Common myeloid progenitor, CD34-positive (primary cell): ENCODE measurements at regions of chr13 and their contacts with region 1.

Region 1: DNA sequence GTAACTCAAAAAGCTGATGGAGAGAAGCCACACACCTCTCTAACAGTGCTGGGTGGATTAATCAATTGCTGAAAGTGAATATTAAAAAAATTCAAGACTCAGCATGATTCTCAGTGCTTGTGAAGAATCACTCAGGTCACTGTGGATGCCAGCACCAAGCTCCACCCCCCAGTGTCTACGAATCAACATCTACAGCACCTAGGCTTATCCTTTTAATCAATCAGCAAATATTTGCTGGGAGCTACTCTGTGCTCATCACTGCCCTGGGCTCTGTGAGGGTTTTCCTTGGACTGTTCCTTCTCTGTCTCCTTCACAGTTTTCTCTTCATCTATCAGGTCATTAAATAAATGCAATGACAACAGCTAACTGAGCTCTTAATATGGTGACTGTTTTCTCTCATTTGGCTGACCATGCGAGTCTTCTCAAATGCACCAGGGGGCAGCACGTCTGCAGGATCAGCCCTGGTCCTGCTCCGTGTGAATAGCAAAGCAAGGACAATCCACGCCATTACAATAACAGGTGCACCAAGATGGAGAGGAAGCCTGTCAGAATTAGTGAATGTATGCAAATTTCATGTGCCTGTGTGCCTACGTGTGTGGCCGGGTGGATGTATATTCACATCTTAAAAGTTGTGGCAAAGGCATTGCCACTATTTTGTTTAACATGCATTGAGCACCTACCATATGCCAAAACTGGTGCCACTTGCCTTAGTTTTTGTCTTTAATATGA is 14.6 kb upstream of the C13orf42 start:
- DNase-seq: peak; percentile 67 to 83 (median 82)
- H3K4me3 ChIP-seq: no peak overlapping the region
- H3K27ac ChIP-seq: no peak overlapping the region
- H3K4me1 ChIP-seq: no peaks in the 10 kb centered on the region
- H3K27me3 ChIP-seq: no peaks in the 10 kb centered on the region

Region 2: GRCh38 chr13:51113969-51114368 is 11.7 kb before region 1 on chr13:
- CTCF ChIA-PET with region 1: interaction called, 18 read pairs
- POLR2A ChIA-PET with region 1: no interaction called
- DNase-seq: no peak
- H3K4me3 ChIP-seq: no peak overlapping the region
- H3K27ac ChIP-seq: no peak overlapping the region
- H3K4me1 ChIP-seq: no peaks in the 10 kb centered on the region
- H3K27me3 ChIP-seq: peaks cover 0 to 2% (median 0%) of the 10 kb centered on the region in 5 experiments

Region 3: GRCh38 chr13:51181786-51182383 is 56.2 kb after region 1 on chr13:
- CTCF ChIA-PET with region 1: no interaction called
- POLR2A ChIA-PET with region 1: no interaction called
- DNase-seq: no peak
- H3K4me3 ChIP-seq: no peak overlapping the region
- H3K27ac ChIP-seq: no peak overlapping the region
- H3K4me1 ChIP-seq: no peaks in the 10 kb centered on the region
- H3K27me3 ChIP-seq: no peaks in the 10 kb centered on the region

Region 4: GRCh38 chr13:51435002-51435578 is 309.4 kb after region 1 on chr13:
- CTCF ChIA-PET with region 1: interaction called, 10 read pairs
- POLR2A ChIA-PET with region 1: no interaction called
- DNase-seq: peak; percentile 36 to 66 (median 62)
- H3K4me3 ChIP-seq: no peak overlapping the region
- H3K27ac ChIP-seq: no peak overlapping the region
- H3K4me1 ChIP-seq: no peaks in the 10 kb centered on the region
- H3K27me3 ChIP-seq: no peaks in the 10 kb centered on the region